AG04449 (cell line): ENCODE measurements at regions of chr14 and their contacts with region 1.

Region 1: GRCh38 chr14:77040059-77040740 is 11.7 kb upstream of the IRF2BPL start:
- DNase-seq: peak; percentile 90
- H3K4me3 ChIP-seq: peak overlapping the region; percentile 42
- CTCF ChIP-seq: no peak

Region 2: GRCh38 chr14:77028384-77029231 is 11.6 kb before region 1 on chr14 and contains the start of gene IRF2BPL:
- CTCF ChIA-PET with region 1: interaction called, 5 read pairs
- POLR2A ChIA-PET with region 1: interaction called, 14 read pairs
- DNase-seq: peak; percentile 92
- H3K4me3 ChIP-seq: peak within 1 kb of the TSS; percentile 92
- CTCF ChIP-seq: no peak

Region 3: DNA sequence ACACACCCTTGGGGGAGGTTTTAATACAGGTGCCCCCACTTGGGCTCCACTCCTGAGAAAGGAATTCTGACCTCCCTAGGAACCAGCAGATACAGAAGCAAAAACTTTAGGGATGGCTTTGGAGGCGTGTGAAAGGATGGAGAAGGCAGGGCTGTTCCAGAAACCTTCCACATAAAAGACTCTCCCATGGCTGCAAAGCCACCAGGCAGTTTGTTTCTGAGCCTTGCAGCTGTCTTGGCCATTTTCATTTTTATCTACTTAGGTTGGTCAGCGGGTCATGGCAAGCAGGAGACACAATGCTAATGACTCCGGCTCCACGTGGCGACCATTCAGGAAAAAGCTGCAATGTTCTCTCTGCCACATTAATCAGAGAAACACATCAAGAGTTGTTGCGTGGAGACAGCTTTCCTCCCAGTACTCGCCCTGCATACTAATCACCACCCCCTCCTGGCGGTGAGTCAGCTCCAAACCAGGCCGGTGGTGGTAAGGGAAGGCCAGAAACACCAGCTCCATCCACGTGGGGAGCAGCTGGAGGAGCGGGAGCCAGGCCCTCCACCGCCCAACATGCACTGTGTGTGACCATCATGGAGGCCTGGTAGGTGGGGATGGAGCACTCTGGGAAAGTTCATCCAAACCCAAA is 19.2 kb after region 1 on chr14:
- CTCF ChIA-PET with region 1: interaction called, 58 read pairs
- POLR2A ChIA-PET with region 1: interaction called, 5 read pairs
- DNase-seq: no peak
- H3K4me3 ChIP-seq: no peak overlapping the region
- CTCF ChIP-seq: peak; percentile 44